Mucosa of descending colon (tissue), 3 donors: ENCODE measurements at regions of chr5 and their contacts with region 1.

Region 1: GRCh38 chr5:110463106-110463505 is 263.4 kb downstream of the TMEM232 start:
- DNase-seq: no peak
- ATAC-seq: no peak
- H3K4me3 ChIP-seq: no peak overlapping the region
- H3K4me1 ChIP-seq: no peaks in the 10 kb centered on the region
- CTCF ChIP-seq: no peak

Region 2: DNA sequence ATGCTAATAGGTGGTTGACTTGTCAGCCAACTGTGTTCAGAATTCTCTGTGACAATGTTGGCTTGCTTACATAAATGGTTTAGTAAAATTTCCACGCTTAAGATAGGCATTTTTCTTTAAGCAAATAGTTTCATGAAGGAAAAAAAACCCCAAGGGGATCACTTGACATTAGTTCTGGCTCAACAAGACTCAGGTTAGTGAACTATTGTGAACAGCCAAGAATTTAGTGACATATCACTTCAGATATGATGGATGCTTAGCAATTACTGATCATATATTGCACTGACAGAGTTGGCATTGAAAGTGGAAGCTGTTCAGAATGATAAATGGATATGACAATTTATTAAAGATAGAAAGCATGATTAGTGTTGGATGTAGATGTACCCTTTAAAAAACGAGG is 44.9 kb after region 1 on chr5:
- intact Hi-C with region 1: loop called in 1 of 2 experiments (anchors 2 kb)
- DNase-seq: no peak
- ATAC-seq: no peak
- H3K4me3 ChIP-seq: no peak overlapping the region
- H3K4me1 ChIP-seq: no peaks in the 10 kb centered on the region
- CTCF ChIP-seq: no peak

Region 3: GRCh38 chr5:110590187-110590586 is 127.1 kb after region 1 on chr5:
- intact Hi-C with region 1: loop called in 1 of 2 experiments (anchors 10 kb)
- DNase-seq: no peak
- ATAC-seq: no peak
- H3K4me3 ChIP-seq: no peak overlapping the region
- H3K4me1 ChIP-seq: no peaks in the 10 kb centered on the region
- CTCF ChIP-seq: no peak